ENCODE measurements at regions of chr5 and their contacts with region 1.

Region 1: DNA sequence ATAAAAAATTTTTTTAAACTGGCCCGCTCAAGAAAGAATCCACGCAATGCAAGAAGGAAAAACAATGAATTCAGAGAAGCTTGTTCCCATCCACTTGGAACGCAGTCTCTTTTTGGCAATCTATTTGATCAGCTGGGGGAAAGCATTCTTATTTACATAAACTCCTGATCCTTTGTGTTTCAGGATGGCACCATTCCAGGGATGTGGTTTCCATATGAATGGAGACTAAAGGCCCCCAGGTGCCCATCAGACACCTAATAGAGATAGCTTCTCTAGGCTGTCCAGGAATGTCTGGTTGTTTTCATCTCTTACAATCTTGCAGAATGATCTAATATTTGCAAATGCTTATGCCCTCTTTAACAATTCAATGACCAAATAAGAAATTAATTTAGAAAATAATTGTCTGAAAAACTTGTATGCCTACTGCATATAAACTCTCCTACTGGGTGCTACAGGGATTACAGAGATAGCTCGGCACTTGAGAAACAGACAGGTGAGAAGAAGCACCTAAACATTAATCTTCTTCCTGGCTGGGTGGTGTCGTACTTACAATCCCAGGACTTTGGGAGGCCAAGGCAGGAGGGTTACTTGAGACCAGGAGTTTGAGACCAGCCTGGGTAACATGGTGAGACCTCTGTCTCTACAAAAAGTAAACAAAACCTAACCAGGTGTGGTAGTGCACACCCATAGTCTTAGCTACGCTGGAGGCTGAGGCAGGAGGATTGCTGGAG is 3.0 kb upstream of the RASGRF2 start:
- DNase-seq: no peak
- ATAC-seq: peak; percentile 55
- H3K4me3 Mint-ChIP-seq: peak overlapping the region; percentile 33
- H3K27ac Mint-ChIP-seq: peak overlapping the region; percentile 91
- H3K4me1 Mint-ChIP-seq: peaks cover 61% of the 10 kb centered on the region
- H3K27me3 Mint-ChIP-seq: peaks cover 20% of the 10 kb centered on the region
- CTCF ChIP-seq: no peak

Region 2: DNA sequence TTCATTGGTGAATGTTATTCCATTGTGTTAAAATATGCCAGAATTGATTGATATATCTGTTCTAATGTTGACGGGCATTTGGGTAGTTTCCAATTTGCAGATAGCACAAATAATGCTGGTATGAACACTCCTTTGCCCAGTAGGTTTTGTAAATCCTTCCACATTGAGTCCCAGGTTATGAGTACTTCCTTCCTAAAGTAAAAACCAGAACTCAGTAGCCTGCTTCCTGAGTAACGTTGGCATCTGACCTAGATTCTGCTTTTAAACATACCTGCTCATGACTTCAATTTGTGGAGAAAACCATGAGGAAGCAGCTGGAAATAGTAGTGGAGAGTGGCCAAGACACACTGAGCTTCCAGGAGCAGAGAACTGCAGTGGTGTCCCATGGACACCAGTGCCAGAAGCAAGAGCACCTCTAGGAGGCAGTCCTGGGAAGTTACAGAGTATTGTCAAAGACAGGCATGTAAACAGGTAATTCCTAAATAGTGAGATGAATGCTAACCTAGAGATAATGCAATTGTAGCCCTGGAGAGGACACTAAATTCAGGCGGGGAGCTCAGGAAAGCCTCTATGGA is 21.3 kb before region 1 on chr5:
- CTCF ChIA-PET with region 1: interaction called, 15 read pairs
- POLR2A ChIA-PET with region 1: no interaction called
- DNase-seq: no peak
- ATAC-seq: peak; percentile 91
- H3K4me3 Mint-ChIP-seq: no peak overlapping the region
- H3K27ac Mint-ChIP-seq: peak overlapping the region; percentile 67; the same call in 1 of the 2 replicates
- H3K4me1 Mint-ChIP-seq: no peaks in the 10 kb centered on the region; the same call in 1 of the 2 replicates
- H3K27me3 Mint-ChIP-seq: no peaks in the 10 kb centered on the region; the same call in 1 of the 2 replicates
- CTCF ChIP-seq: no peak

Region 3: DNA sequence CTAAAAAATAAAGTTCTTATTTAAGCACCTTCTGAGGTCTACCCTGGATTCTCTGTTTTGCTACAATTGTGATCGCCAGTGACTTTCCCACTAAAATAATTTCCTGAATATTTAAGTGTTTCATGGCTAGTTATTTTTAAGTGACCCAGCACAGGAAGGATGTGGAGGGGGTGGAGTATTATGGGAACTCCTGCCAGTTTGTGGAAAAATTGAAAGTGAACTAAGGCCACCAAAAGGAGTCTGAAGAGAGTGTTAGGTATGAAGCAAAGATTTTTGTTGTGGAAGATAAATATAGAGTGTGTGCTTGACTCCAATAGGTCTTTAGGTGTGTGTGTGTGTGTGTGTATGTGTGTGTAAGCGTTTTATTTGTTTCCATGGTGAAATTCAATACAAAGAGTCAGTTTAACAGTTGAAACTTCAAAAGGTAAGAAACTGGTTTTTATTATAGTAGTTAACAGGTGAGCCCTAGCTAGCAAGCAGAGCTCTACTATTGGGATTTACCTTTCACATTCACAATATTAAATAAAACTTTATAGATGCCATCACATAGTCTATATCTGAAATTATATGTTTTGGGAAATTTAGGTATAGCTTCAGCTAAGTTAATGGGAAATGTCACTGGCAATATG is 28.5 kb after region 1 on chr5:
- CTCF ChIA-PET with region 1: no interaction called
- POLR2A ChIA-PET with region 1: no interaction called
- DNase-seq: no peak
- ATAC-seq: no peak
- H3K4me3 Mint-ChIP-seq: no peak overlapping the region
- H3K27ac Mint-ChIP-seq: peak overlapping the region; percentile 10; the same call in 1 of the 2 replicates
- H3K4me1 Mint-ChIP-seq: peaks cover 40% of the 10 kb centered on the region
- H3K27me3 Mint-ChIP-seq: no peaks in the 10 kb centered on the region
- CTCF ChIP-seq: no peak

Measured in WTC11 (cell line).